Mammary epithelial cell (primary cell): ENCODE measurements at regions of chrX and their contacts with region 1.

Region 1: GRCh38 chrX:14528629-14529289 is 577 bp upstream of the GLRA2 start:
- DNase-seq: peak; percentile 60
- H3K4me3 ChIP-seq: peak overlapping the region in 1 of 3 experiments; percentile 40
- H3K27ac ChIP-seq: no peak overlapping the region
- H3K4me1 ChIP-seq: no peaks in the 10 kb centered on the region
- H3K27me3 ChIP-seq: no peaks in the 10 kb centered on the region
- CTCF ChIP-seq: peak; percentile 54 to 83

Region 2: DNA sequence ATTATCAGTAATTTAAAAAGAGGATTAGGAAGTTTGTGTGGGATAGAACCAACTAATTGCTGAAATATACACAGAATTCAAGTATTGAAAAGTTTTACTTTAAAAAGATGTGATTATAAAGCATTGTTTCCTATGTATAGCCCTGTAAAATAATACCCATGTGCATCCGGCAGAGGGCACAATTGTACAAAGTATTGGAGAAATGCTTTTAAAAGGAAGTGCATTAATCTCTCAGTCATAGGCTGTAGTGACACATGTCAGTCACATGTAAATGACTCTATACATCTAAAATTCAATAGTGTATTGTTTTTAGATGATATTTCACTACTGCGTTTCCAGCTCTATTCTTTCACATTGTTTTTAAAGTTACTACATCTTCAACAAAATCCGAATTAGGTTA is 489.4 kb before region 1 on chrX:
- CTCF ChIA-PET with region 1: no interaction called
- dilution Hi-C with region 1: no loop called
- in situ Hi-C with region 1: no loop called
- intact Hi-C with region 1: loop called (anchors 1 kb)
- DNase-seq: peak; percentile 25
- H3K4me3 ChIP-seq: no peak overlapping the region
- H3K27ac ChIP-seq: no peak overlapping the region
- H3K4me1 ChIP-seq: peaks cover 4% of the 10 kb centered on the region
- H3K27me3 ChIP-seq: no peaks in the 10 kb centered on the region
- CTCF ChIP-seq: peak; percentile 71 to 72

Region 3: DNA sequence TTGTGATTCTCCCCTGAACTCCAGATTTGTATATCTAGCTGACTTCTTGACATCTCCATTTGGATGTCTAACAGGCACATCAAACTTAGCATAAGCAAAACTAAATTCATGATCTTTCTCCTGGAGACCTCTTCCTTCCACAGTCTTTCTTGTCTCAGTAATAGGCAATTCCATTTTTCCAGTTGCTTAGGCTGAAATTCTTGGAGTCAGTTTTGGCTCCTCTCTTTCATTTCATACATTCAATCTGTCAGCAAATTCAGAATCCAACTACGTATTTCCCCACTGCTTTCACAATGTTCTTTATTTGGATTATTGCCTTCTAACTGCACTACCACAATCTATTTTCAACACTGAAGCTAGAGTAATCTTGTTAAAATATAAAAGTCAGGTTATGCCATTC is 219.3 kb before region 1 on chrX:
- CTCF ChIA-PET with region 1: no interaction called
- dilution Hi-C with region 1: no loop called
- in situ Hi-C with region 1: no loop called
- intact Hi-C with region 1: loop called (anchors 2 kb)
- DNase-seq: no peak
- H3K4me3 ChIP-seq: no peak overlapping the region
- H3K27ac ChIP-seq: no peak overlapping the region
- H3K4me1 ChIP-seq: no peaks in the 10 kb centered on the region
- H3K27me3 ChIP-seq: no peaks in the 10 kb centered on the region
- CTCF ChIP-seq: no peak

Region 4: GRCh38 chrX:14616836-14617235 is 88.1 kb after region 1 on chrX:
- CTCF ChIA-PET with region 1: no interaction called
- dilution Hi-C with region 1: no loop called
- in situ Hi-C with region 1: no loop called
- intact Hi-C with region 1: no loop called
- DNase-seq: no peak
- H3K4me3 ChIP-seq: no peak overlapping the region
- H3K27ac ChIP-seq: no peak overlapping the region
- H3K4me1 ChIP-seq: no peaks in the 10 kb centered on the region
- H3K27me3 ChIP-seq: no peaks in the 10 kb centered on the region
- CTCF ChIP-seq: no peak

Region 5: GRCh38 chrX:14963447-14964236 is 434.9 kb after region 1 on chrX:
- CTCF ChIA-PET with region 1: interaction called, 3 read pairs
- dilution Hi-C with region 1: no loop called
- in situ Hi-C with region 1: no loop called
- intact Hi-C with region 1: loop called (anchors 10 kb)
- DNase-seq: peak; percentile 90
- H3K4me3 ChIP-seq: peak overlapping the region in 1 of 3 experiments; percentile 31
- H3K27ac ChIP-seq: peak overlapping the region; percentile 93
- H3K4me1 ChIP-seq: peaks cover 22% of the 10 kb centered on the region
- H3K27me3 ChIP-seq: no peaks in the 10 kb centered on the region
- CTCF ChIP-seq: no peak

Region 6: GRCh38 chrX:15242899-15243555 is 714.3 kb after region 1 on chrX:
- CTCF ChIA-PET with region 1: interaction called, 4 read pairs
- dilution Hi-C with region 1: no loop called
- in situ Hi-C with region 1: no loop called
- intact Hi-C with region 1: loop called (anchors 5 kb)
- DNase-seq: peak; percentile 43
- H3K4me3 ChIP-seq: no peak overlapping the region
- H3K27ac ChIP-seq: no peak overlapping the region
- H3K4me1 ChIP-seq: no peaks in the 10 kb centered on the region
- H3K27me3 ChIP-seq: no peaks in the 10 kb centered on the region
- CTCF ChIP-seq: peak; percentile 61 to 74